ENCODE measurements at regions of chr6 and their contacts with region 1.

Region 1: DNA sequence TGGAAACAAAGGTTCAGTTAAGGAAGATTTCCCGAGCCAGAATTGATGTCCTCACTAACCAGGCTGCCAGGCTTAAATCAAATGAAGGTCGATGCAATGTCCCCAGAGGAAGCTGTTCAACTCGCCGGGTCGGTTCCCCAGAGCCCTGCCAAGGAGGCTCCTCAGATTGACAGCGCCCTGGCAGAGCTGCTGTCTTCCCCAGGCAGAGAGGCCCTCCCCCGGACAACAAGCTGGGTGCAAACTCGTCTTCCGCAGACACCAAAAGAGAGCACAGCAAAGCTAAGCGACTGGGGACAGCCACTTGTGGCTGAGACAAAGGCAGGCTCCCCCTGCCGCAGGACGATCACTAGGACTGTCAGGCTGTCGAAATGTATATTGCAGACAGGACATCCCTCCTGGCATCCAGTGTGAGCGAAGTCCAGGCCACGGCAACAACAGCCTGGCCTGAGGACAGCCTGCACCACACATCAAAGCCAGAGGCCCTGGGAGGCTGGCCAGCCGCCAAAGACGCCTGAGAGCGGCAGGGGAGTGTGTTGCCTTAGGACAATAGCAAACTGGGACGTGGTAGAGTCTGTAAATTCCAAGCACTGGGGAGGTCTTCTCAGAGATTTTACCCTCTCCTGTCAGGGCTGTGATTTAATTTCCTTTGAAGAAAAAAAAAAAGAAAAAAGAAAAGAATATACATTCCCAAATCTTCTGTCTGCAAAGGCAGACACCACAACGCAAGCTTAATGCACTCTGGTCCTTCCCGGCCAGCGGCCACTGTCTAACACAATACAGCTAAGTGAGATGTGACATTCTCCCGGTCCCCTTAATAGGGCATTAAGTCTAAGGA is 99.1 kb downstream of the HIVEP2 start:
- DNase-seq: peak; percentile 48
- H3K4me3 Mint-ChIP-seq: peak overlapping the region; percentile 81
- H3K27ac Mint-ChIP-seq: peak overlapping the region; percentile 91
- H3K4me1 Mint-ChIP-seq: peaks cover 91% of the 10 kb centered on the region
- H3K27me3 Mint-ChIP-seq: no peaks in the 10 kb centered on the region

Region 2: GRCh38 chr6:142692942-142693341 is 152.9 kb before region 1 on chr6:
- intact Hi-C with region 1: loop called (anchors 2 kb)
- DNase-seq: peak; percentile 42
- H3K4me3 Mint-ChIP-seq: no peak overlapping the region
- H3K27ac Mint-ChIP-seq: no peak overlapping the region
- H3K4me1 Mint-ChIP-seq: peaks cover 22% of the 10 kb centered on the region
- H3K27me3 Mint-ChIP-seq: no peaks in the 10 kb centered on the region

Region 3: DNA sequence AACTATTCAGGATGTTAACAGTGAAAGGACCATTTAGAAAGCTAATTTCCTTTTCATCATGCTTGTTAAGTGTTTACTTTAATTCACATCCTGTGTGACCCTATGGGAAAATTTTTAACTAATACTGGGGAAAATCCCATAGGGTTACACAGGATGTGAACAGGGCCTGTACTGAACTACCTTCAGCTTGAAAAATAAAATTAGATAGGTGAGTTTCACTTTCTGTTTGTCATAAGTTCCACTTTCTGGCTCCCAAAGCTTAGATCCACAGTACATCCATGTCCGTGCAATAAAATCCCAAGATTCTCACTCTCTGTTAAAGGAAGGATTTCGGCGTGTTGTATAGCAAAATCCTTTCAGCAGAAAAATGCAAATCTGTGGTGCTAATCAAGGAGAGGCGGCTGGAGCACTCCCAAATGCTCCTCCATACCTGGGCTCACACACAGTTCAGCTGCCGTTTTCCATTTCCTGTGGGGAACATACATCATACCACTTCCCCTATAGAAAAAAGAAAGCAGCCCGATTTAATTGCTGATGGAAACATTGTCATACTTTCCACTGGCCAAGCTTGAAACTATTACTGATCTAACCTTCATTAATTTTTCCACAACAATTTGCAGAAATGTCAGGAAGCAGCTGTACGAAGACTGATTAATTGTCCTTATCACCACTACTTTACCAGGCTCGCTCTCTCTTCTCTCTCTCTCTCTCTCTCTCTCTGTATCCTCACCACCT is 26.1 kb before region 1 on chr6:
- intact Hi-C with region 1: loop called (anchors 1 kb)
- DNase-seq: peak; percentile 50
- H3K4me3 Mint-ChIP-seq: peak overlapping the region; percentile 85
- H3K27ac Mint-ChIP-seq: peak overlapping the region; percentile 98
- H3K4me1 Mint-ChIP-seq: peaks cover 75% of the 10 kb centered on the region
- H3K27me3 Mint-ChIP-seq: peaks cover 3% of the 10 kb centered on the region

Region 4: GRCh38 chr6:142885182-142885867 is 39.5 kb after region 1 on chr6:
- intact Hi-C with region 1: loop called (anchors 1 kb)
- DNase-seq: peak; percentile 45
- H3K4me3 Mint-ChIP-seq: peak overlapping the region; percentile 96
- H3K27ac Mint-ChIP-seq: peak overlapping the region; percentile 99
- H3K4me1 Mint-ChIP-seq: peaks cover 92% of the 10 kb centered on the region
- H3K27me3 Mint-ChIP-seq: no peaks in the 10 kb centered on the region

Region 5: GRCh38 chr6:143026696-143027449 is 181.0 kb after region 1 on chr6:
- intact Hi-C with region 1: loop called (anchors 5 kb)
- DNase-seq: peak; percentile 9
- H3K4me3 Mint-ChIP-seq: no peak overlapping the region
- H3K27ac Mint-ChIP-seq: no peak overlapping the region
- H3K4me1 Mint-ChIP-seq: peaks cover 11% of the 10 kb centered on the region
- H3K27me3 Mint-ChIP-seq: no peaks in the 10 kb centered on the region

Region 6: DNA sequence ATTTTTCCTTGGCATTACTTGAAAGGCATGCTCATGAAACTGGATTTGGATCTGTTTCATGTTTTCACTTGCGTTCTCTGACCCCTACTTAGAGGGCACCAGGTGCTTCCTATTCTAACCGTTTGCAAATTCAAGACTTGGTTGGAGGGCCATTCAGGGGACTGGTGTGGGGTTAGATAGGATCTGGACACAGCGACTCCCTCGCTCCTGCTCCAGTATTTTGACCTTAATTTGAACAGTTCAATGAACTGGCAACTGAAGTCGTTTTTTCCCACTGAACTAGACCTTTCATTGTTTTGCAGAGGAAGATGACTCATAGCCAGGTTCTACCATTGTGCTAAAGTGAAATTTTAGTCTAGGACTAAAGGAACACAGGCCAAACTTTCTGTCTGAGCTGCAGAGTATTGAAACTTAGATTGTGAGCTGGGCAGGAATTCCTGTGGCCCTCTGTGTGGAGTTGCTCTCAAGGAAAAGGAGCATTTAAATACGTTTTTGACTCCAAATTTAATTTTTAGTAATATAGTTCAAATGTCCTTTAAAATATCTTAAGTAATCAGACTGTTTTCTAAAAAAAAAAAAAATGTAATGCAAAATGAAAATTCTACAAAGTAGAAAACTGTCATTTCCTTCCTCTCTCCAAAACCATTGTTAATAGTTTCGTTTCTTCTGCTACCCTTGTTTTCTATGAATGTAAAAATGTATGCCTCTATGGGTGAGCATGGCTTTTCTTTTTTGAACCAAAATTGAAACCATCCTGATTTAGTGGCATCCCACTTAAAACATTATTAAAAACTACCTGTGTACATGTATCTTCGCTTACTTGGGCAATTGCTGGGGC is 1504.1 kb after region 1 on chr6:
- intact Hi-C with region 1: loop called (anchors 10 kb)
- DNase-seq: no peak
- H3K4me3 Mint-ChIP-seq: peak overlapping the region; percentile 83
- H3K27ac Mint-ChIP-seq: peak overlapping the region; percentile 94
- H3K4me1 Mint-ChIP-seq: peaks cover 89% of the 10 kb centered on the region
- H3K27me3 Mint-ChIP-seq: no peaks in the 10 kb centered on the region

Measured in activated T-helper 1 cell treated with anti-CD3 and anti-CD28 coated beads, Interleukin-12 subunit alpha, Interleukin-12 subunit beta, Interleukin-2, Interleukin-4 antibody, amounts not matched to agents 30 ng/mL and 10 ng/mL and 1 ng/mL, durations not matched to agents 14 hours and 24 hours and 36 hours (primary cell).